ENCODE measurements at regions of chr10 and their contacts with region 1.

Region 1: GRCh38 chr10:6513476-6513875 is 66.6 kb downstream of the PRKCQ start:
- DNase-seq: peak; percentile 64
- H3K4me3 Mint-ChIP-seq: peak overlapping the region; percentile 19
- H3K27ac Mint-ChIP-seq: peak overlapping the region; percentile 54
- H3K4me1 Mint-ChIP-seq: peaks cover 72% of the 10 kb centered on the region
- H3K27me3 Mint-ChIP-seq: no peaks in the 10 kb centered on the region

Region 2: GRCh38 chr10:6498771-6499170 is 14.7 kb before region 1 on chr10:
- CTCF ChIA-PET with region 1: interaction called, 3 read pairs
- intact Hi-C with region 1: loop called (anchors 1 kb)
- DNase-seq: peak; percentile 67
- H3K4me3 Mint-ChIP-seq: peak overlapping the region; percentile 20
- H3K27ac Mint-ChIP-seq: peak overlapping the region; percentile 85
- H3K4me1 Mint-ChIP-seq: peaks cover 47% of the 10 kb centered on the region
- H3K27me3 Mint-ChIP-seq: no peaks in the 10 kb centered on the region